Ovary (tissue), 10 donors: ENCODE measurements at regions of chr10 and their contacts with region 1.

Region 1: DNA sequence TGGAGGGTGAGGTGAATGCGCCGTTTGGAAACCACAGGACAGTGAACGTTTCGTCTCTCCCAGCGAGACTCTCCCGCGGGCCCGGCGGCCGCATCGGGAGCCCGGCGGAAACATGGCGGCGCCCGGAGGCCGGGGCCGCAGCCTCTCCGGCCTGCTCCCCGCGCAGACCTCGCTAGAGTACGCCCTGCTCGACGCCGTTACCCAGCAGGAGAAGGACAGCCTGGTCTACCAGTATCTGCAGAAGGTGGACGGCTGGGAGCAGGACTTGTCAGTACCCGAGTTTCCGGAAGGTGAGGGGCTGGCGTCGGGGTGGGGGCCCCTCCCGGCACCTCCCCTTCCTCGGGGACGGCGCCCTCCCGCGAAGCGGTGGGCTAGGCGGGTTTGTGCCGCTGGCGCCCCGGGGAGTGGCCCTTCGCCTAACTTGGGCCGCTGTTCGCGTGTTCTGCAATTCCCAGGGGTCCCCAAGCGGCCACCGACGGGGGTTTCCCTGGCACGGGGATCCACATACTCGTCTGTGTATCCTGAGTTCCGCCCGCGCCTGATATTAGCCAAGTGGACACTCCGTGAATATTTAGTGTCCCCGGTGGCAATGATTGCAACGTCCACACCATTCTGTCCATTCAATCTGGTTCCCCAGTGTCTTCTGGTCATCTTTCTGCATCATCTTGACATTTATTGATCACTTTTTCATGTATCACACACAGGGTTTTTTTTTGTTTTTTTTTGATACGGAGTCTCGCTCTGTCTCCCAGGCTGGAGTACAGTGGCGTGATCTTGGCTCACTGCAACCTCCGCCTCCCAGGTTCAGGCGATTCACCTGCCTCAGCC is 514 bp downstream of the NHLRC2 start:
- DNase-seq: peak in 4 of 5 donors; percentile 51 to 75 (median 60)
- H3K4me3 ChIP-seq: peak overlapping the region; percentile 90
- H3K27ac ChIP-seq: peak overlapping the region; percentile 83
- H3K4me1 ChIP-seq: peaks cover 6% of the 10 kb centered on the region
- H3K27me3 ChIP-seq: no peaks in the 10 kb centered on the region
- CTCF ChIP-seq: peak in 1 of 3 donors; percentile 21
- EP300 ChIP-seq: no peak
- POLR2A ChIP-seq: no peak

Region 2: DNA sequence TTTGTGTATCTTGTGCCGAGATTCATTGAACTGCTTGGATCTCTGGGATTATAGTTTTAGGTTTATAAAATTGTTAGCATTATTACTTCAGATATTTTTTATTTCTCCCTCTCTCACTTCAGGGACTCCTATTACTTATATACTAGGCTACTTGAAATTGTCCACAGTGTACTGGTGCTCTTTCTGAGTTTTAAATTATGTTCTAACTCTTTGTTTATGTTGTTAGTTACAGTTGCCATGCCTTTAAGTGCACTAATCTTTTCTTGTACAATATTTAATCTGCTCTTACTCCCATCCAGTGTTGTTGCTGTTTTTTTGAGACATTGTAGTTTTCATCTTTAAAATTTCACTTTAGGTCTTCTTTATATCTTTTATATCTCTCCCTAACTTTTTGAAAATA is 90.4 kb before region 1 on chr10:
- intact Hi-C with region 1: no loop called
- DNase-seq: no peak
- H3K4me3 ChIP-seq: no peak overlapping the region
- H3K27ac ChIP-seq: no peak overlapping the region
- H3K4me1 ChIP-seq: no peaks in the 10 kb centered on the region
- H3K27me3 ChIP-seq: no peaks in the 10 kb centered on the region
- CTCF ChIP-seq: no peak
- EP300 ChIP-seq: no peak
- POLR2A ChIP-seq: no peak

Region 3: DNA sequence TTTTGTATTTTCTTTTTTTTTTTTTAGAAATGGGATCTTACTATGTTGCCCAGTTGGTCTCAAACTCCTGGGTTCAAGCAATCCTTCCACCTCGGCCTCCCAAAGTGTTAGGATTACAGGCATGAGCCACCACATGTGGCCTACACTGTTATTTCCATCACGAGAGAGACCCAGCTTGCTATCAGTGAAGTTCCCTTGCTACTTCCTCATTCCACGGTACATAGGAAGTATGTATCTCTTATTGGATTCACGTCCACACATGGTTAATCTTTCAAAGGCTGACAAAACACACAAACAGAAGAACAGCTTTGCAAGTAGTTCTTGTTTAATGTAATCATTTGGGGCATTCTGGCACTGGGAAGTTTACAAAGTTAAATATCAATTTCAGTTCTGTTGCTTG is 52.0 kb before region 1 on chr10:
- intact Hi-C with region 1: loop called in 1 of 4 experiments (anchors 5 kb)
- DNase-seq: no peak
- H3K4me3 ChIP-seq: no peak overlapping the region
- H3K27ac ChIP-seq: no peak overlapping the region
- H3K4me1 ChIP-seq: no peaks in the 10 kb centered on the region
- H3K27me3 ChIP-seq: no peaks in the 10 kb centered on the region
- CTCF ChIP-seq: no peak
- EP300 ChIP-seq: no peak
- POLR2A ChIP-seq: no peak